ENCODE measurements at regions of chr3 and their contacts with region 1.

Region 1: DNA sequence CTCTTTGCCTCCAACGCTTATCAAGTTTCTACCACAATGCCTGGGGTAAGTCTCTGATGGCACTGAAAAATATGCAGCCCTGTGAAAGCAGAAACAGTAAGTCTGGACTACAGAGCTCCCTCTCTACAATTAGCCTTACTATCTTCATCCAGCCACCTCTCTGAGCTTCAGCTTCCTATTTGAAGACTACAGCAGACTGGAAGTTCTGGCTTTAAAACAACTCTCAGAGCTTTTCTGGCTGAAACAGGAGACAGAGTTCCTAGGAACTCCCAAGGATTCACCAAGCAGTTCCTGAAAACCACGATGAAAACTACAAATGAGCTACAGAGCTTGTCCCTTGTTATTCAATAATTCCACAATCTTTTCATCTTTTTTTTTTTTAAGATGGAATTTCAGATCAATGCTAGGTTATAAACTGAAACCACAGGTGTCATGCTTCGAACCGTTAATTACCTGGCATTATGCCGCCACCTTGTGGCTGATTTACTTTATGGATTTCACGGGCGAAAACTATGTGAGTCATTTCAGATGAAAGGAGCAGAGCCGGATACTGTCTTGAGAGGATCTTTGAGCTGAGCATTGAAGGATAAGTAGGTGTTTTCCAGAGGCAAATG is 3.9 kb downstream of the CRYGS start:
- DNase-seq: peak; percentile 60 to 93 (median 79)
- ATAC-seq: peak; percentile 86 to 97 (median 95)
- H3K4me3 ChIP-seq: no peak overlapping the region
- H3K4me3 Mint-ChIP-seq: no peak overlapping the region
- H3K27ac ChIP-seq: no peak overlapping the region
- H3K27ac Mint-ChIP-seq: peak overlapping the region; percentile 4 to 68
- H3K4me1 ChIP-seq: peaks cover 3 to 6% of the 10 kb centered on the region in 2 experiments
- H3K4me1 Mint-ChIP-seq: peaks cover 9 to 15% (median 9%) of the 10 kb centered on the region in 3 donors
- H3K27me3 ChIP-seq: no peaks in the 10 kb centered on the region
- H3K27me3 Mint-ChIP-seq: no peaks in the 10 kb centered on the region

Region 2: DNA sequence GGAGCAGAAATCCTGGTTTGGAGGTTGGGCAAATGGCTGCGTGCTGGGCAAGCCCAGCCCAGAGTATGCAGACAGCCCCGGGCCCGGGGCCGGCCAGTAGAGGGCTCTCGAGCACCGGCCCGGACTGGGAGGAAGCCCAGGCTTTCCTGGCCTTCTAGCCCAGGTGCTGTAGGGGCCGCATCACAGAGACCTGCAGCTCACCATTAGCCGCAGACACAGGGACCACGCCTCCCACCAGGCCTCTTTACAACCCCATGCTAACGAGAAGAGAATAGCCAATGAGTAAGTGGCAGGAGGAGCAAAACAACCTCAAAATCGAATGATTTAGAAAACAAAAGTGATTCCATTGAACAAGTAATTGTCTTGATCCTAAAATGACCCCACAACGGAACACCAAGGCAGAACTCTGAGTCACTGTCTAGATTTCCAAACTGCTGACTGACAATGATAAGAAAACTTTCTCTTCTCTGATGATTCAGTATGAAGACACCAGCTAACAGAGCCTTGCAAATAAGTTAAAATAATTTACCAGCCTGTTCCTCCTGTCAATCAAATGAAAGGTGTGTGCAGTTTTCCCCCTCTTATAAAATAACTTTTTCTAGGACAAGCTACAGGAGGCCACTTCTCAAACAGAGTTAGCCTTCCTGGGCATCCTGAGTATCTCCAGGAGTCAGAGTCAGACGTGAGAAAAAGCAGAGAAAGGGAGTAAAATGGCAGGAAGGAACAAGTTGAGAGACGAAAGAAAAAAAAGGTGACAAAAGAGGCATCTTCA is 280.5 kb before region 1 on chr3:
- CTCF ChIA-PET with region 1: interaction called, 37 to 51 read pairs
- POLR2A ChIA-PET with region 1: no interaction called
- DNase-seq: peak; percentile 19 to 74 (median 48)
- ATAC-seq: peak; percentile 88 to 97 (median 94)
- H3K4me3 ChIP-seq: no peak overlapping the region
- H3K4me3 Mint-ChIP-seq: no peak overlapping the region
- H3K27ac ChIP-seq: no peak overlapping the region
- H3K27ac Mint-ChIP-seq: peak overlapping the region; percentile 17 to 41
- H3K4me1 ChIP-seq: peaks cover under 1 to 13% of the 10 kb centered on the region in 2 experiments
- H3K4me1 Mint-ChIP-seq: peaks cover 13 to 23% (median 15%) of the 10 kb centered on the region in 3 donors
- H3K27me3 ChIP-seq: no peaks in the 10 kb centered on the region
- H3K27me3 Mint-ChIP-seq: no peaks in the 10 kb centered on the region

Region 3: GRCh38 chr3:186520957-186521842 is 19.1 kb before region 1 on chr3:
- CTCF ChIA-PET with region 1: interaction called, 8 to 51 read pairs
- POLR2A ChIA-PET with region 1: interaction called, 3 to 5 read pairs
- DNase-seq: no peak
- ATAC-seq: no peak
- H3K4me3 ChIP-seq: no peak overlapping the region
- H3K4me3 Mint-ChIP-seq: no peak overlapping the region
- H3K27ac ChIP-seq: no peak overlapping the region
- H3K27ac Mint-ChIP-seq: peak overlapping the region in 1 of 2 donors; percentile 1
- H3K4me1 ChIP-seq: peaks cover 42 to 51% of the 10 kb centered on the region in 2 experiments
- H3K4me1 Mint-ChIP-seq: peaks cover 41 to 58% (median 51%) of the 10 kb centered on the region in 3 donors
- H3K27me3 ChIP-seq: no peaks in the 10 kb centered on the region
- H3K27me3 Mint-ChIP-seq: no peaks in the 10 kb centered on the region

Measured in T-cell (primary cell).